ENCODE measurements at regions of chr4 and their contacts with region 1.

Region 1: GRCh38 chr4:126627255-126627654 is 1005.5 kb upstream of the INTU start:
- DNase-seq: no peak

Region 2: GRCh38 chr4:126172126-126172525 is 455.1 kb before region 1 on chr4:
- intact Hi-C with region 1: no loop called
- DNase-seq: no peak

Region 3: DNA sequence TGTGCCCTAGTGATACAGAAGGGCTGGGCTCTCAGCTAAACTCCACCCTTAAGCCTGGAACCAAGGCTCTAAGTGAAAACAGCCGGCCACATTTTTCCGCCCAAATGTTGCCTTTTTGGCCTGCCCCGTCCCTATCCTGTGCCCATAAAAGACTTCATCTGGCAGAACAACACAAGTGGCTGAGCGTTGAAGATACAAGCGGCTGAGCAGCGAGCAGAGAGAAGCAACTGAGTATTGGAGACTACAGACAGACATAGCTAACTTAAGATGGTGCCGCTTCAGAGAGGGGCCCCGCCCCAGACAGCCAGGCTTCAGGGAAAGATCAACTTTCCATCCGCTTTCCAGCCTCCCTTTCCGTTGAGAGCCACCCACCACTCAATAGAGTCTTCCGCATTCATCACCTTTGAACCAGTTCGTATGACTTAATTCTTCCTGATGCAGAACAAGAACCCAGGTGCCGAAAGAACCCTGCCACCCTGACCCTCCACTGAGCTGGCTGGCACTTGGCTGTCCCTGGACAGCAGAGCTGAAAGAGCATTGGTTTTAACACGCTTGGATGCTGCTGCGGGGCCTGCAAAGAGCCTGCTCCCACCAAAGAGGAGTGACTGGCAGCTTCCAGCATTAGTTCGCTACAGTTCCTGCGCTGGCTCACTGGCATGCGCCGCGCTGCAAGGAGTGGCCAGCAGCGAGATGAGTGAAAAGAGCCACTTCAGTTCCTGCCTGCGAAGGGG is 152.3 kb after region 1 on chr4:
- intact Hi-C with region 1: loop called (anchors 10 kb)
- DNase-seq: no peak

Region 4: DNA sequence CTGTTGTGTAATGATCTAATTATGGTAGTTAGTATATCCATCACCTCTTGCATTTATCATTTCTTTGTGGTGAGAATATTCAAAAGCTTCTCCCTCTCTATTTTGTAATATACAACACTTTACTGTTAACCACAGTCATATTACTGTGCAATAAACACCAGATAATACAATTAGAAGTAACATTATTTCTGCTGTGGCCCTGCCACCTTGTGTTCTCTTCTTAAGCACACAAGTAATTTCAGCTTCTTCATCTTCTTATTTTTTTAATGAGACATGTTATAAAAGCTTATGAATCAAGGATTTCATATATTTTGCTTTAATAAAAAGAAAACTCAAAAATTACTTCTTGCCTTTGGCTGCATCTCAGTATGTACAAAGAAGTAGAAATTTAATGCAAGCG is 330.3 kb after region 1 on chr4:
- intact Hi-C with region 1: loop called (anchors 10 kb)
- DNase-seq: no peak